ENCODE measurements at regions of chr6 and their contacts with region 1.

Region 1: DNA sequence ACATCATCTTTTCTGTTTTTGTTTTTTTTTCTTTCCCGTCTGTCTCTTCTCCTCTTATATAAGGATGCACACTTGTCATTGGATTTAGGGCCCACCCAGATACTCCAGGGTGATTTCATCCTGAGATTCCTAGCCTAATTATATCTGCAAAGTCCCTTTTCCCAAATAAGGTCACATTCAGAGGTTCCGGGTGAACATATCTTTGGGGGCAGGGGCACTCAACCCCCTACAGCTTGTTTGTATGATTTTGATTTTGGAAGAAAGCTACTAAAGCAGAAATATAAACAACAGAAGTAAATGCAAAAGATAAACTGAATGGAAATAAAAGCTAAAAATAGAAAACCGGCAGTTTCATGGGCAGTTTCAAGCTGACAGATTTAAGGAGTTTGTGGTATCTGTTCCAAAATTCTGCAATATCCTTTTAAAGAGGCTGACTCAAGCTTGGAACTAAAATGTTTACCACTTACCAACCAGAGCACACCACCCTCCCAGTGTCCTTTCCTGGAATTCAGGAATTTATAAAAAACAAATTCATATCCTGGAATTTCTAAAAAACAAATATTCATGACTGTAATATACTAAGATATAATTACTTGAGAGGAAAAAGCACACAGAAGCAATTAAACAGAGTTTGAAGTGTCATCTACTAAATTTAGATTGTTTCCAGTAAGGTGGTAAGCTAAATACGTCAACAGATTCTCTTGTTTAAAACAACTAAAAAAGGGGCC is 100.0 kb upstream of the CARMIL1 start:
- DNase-seq: no peak
- H3K4me3 Mint-ChIP-seq: peak overlapping the region; percentile 39
- H3K27ac Mint-ChIP-seq: peak overlapping the region; percentile 86
- H3K4me1 Mint-ChIP-seq: peaks cover 64% of the 10 kb centered on the region
- H3K27me3 Mint-ChIP-seq: no peaks in the 10 kb centered on the region

Region 2: DNA sequence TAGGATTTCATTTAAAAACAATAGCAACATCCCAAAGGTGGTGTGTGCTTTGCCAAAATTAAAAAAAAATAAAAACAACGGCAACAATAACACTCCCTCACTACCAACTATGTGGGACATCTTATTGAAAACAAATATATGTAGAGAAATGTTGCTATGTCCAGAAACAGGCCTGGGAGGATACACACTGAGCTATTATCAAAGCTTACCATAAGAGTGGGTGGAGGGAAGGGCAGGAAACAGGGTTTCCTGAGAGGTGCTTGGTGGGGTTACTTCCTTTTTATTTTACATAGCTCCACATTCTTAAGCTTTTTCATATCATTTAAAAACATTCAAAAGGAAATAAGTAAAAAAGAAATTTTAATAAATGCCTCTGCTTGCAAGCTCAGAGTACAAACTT is 93.5 kb before region 1 on chr6:
- intact Hi-C with region 1: loop called (anchors 5 kb)
- DNase-seq: no peak
- H3K4me3 Mint-ChIP-seq: no peak overlapping the region
- H3K27ac Mint-ChIP-seq: no peak overlapping the region
- H3K4me1 Mint-ChIP-seq: peaks cover 21% of the 10 kb centered on the region
- H3K27me3 Mint-ChIP-seq: no peaks in the 10 kb centered on the region

Region 3: GRCh38 chr6:25537349-25538018 is 358.3 kb after region 1 on chr6:
- intact Hi-C with region 1: no loop called
- DNase-seq: no peak
- H3K4me3 Mint-ChIP-seq: no peak overlapping the region
- H3K27ac Mint-ChIP-seq: no peak overlapping the region
- H3K4me1 Mint-ChIP-seq: peaks cover 1% of the 10 kb centered on the region
- H3K27me3 Mint-ChIP-seq: peaks cover 4% of the 10 kb centered on the region

Measured in activated T-helper 2 cell treated with anti-CD3 and anti-CD28 coated beads, Interferon-gamma antibody, Interleukin-2, Interleukin-4, amounts not matched to agents 10 μg/mL and 5 μg/mL and 100 μg/mL, durations not matched to agents 14 hours and 24 hours and 36 hours (primary cell).